PC-9 (cell line): ENCODE measurements at regions of chr11 and their contacts with region 1.

Region 1: GRCh38 chr11:7353100-7353499 is 101.4 kb downstream of the SYT9 start:
- DNase-seq: peak in 1 of 2 experiments; percentile 1
- H3K4me3 ChIP-seq: no peak overlapping the region
- H3K27ac ChIP-seq: no peak overlapping the region
- H3K4me1 ChIP-seq: no peaks in the 10 kb centered on the region
- H3K27me3 ChIP-seq: 0 out of 2 replicates have a peak, but pooled peaks cover 2% of the 10 kb centered on the region
- CTCF ChIP-seq: peak; percentile 60

Region 2: DNA sequence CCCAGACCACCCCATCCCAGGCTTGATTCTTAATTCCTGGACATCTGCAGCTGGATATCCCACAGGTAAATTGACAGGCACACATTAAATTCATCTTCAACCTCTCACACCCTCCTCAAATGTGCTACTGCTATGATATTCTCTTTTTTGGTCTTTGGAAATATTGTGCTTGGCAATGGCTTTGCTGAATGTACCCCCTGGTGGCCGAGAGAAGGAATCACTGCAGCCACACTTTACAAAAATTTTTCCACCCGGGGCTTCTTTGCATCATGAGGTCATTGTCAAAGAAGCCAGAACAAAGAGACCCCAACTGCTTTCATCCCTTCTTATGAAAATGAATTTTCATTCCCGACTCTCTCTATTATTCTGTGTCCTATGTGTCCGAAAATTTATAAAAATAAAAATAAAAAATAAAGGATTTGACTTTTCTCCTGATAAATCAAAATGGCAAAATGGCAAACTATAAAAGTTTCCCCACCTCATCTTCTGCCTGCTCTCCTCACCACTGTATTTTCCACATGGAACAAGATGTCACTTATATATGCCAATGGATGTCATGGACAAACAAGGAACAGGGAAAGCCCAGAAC is 335.2 kb after region 1 on chr11:
- CTCF ChIA-PET with region 1: no interaction called
- POLR2A ChIA-PET with region 1: no interaction called
- intact Hi-C with region 1: loop called (anchors 10 kb)
- DNase-seq: no peak
- H3K4me3 ChIP-seq: no peak overlapping the region
- H3K27ac ChIP-seq: no peak overlapping the region
- H3K4me1 ChIP-seq: no peaks in the 10 kb centered on the region
- H3K27me3 ChIP-seq: no peaks in the 10 kb centered on the region
- CTCF ChIP-seq: peak; percentile 76